ENCODE measurements at regions of chr9 and their contacts with region 1.

Region 1: DNA sequence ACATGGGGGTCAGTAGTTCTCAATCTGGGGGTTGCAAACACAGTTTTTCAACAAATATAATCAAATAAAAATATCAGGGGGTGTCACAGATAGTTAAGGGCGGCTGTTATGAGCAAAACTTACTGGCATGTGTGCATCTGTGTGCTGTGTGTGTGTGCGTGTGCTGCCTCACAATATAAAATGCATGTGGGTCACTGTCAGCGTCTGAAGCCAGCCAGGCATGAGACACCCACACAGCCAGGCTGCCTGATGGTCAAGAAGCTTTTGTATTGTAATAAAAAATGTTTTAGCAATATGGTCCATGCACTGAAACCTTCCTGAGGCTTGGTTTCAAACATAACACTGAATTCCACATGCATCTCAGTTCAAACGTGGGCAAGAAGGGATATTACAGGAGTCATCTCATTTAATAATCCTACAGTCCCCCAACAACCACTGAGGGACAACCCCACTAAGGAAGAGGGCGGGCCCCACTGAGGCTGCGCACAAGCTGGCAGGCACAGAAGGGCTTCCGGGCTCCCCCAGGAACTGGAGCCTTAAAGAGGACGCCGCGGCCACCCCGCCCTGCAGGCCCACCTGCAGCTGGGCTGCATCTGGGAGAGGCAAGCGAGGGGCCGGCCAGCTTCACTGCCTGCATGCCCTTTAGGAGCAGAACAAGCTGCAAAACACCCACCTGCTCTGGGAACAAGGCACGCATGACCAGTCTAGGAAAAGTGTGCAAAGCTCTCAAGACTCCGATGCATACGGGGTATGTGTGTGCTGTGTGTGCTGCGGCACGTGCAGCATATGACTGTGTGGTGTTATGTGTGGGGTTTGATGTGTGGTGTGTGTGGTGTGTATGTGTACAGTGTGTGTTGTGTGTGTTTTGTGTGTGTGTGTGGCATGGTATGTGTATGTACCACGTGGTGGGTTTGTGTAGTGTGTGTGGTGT is 14.1 kb downstream of the SEMA4D start:
- DNase-seq: peak; percentile 73
- ATAC-seq: peak; percentile 76
- H3K4me3 ChIP-seq: peak overlapping the region; percentile 39 to 86 (median 58)
- H3K4me3 Mint-ChIP-seq: peak overlapping the region; percentile 91
- H3K27ac ChIP-seq: peak overlapping the region; percentile 48 to 84
- H3K27ac Mint-ChIP-seq: peak overlapping the region; percentile 93
- H3K4me1 ChIP-seq: peaks cover 47 to 50% of the 10 kb centered on the region in 2 donors
- H3K4me1 Mint-ChIP-seq: peaks cover 81% of the 10 kb centered on the region
- H3K27me3 ChIP-seq: no peaks in the 10 kb centered on the region
- H3K27me3 Mint-ChIP-seq: no peaks in the 10 kb centered on the region
- CTCF ChIP-seq: no peak

Region 2: DNA sequence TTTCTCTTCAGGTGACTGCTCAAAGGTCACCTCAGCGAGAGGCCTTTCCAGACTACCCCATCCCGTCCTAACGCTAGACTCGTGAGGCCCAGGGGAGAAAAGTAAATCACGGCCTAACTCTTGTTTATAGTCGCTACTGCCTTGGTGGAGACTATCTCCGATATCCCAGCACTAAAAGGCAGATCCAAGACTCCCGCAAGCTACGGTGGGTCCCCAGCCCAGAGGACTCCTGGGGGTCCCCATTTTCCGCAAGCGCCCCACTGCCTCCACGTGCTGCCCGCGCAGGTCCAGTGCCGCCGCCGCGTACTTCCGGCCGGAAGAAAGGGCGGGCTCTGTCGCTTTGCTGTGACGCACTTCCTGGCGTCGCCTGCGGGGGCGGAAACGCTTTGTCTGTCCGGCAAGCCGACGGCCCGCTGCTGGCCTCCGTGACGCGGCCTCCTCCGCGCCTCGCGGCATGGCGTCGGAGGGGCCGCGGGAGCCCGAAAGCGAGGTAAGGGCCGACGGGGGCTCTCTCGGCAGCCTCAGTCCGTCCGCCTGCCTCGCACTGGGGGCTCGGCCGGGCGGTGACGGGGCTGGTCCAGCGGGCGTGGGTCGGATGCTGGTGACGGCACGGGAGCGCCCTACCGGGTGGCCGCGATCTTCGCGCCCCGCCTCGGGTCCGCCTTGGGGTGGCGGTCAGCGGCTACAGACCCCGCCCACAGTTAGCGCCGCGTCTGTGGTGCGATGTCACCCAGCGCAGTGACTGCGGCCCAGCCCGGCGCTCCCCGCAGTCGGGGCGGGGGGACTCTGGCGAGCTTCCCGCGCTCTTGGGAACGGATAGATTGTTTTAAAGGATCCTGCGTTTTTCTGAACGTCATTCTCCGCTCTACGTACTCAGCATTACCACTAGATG is 165.5 kb before region 1 on chr9 and contains the start of gene SECISBP2:
- CTCF ChIA-PET with region 1: no interaction called
- POLR2A ChIA-PET with region 1: no interaction called
- intact Hi-C with region 1: loop called (anchors 2 kb)
- DNase-seq: peak; percentile 97
- ATAC-seq: peak; percentile 91
- H3K4me3 ChIP-seq: peak within 1 kb of the TSS; percentile 56 to 93 (median 81)
- H3K4me3 Mint-ChIP-seq: peak within 1 kb of the TSS; percentile 89
- H3K27ac ChIP-seq: peak within 1 kb of the TSS; percentile 96 to 99
- H3K27ac Mint-ChIP-seq: peak within 1 kb of the TSS; percentile 93
- H3K4me1 ChIP-seq: peaks cover 20 to 21% of the 10 kb centered on the region in 2 donors
- H3K4me1 Mint-ChIP-seq: peaks cover 65% of the 10 kb centered on the region
- H3K27me3 ChIP-seq: no peaks in the 10 kb centered on the region
- H3K27me3 Mint-ChIP-seq: no peaks in the 10 kb centered on the region
- CTCF ChIP-seq: peak; percentile 82
- total RNA-seq, gene SECISBP2: 124 and 130 TPM in 2 replicates

Region 3: GRCh38 chr9:89464300-89464901 is 19.5 kb before region 1 on chr9:
- CTCF ChIA-PET with region 1: interaction called, 5 read pairs
- POLR2A ChIA-PET with region 1: interaction called, 5 read pairs
- intact Hi-C with region 1: loop called (anchors 1 kb)
- DNase-seq: peak; percentile 32
- ATAC-seq: peak; percentile 37
- H3K4me3 ChIP-seq: peak overlapping the region; percentile 8 to 58 (median 20)
- H3K4me3 Mint-ChIP-seq: peak overlapping the region; percentile 76
- H3K27ac ChIP-seq: peak overlapping the region; percentile 67 to 78
- H3K27ac Mint-ChIP-seq: peak overlapping the region; percentile 78
- H3K4me1 ChIP-seq: peaks cover 72 to 75% of the 10 kb centered on the region in 2 donors
- H3K4me1 Mint-ChIP-seq: peaks cover 90% of the 10 kb centered on the region
- H3K27me3 ChIP-seq: no peaks in the 10 kb centered on the region
- H3K27me3 Mint-ChIP-seq: no peaks in the 10 kb centered on the region
- CTCF ChIP-seq: no peak

Region 4: GRCh38 chr9:89602978-89603766 is 119.3 kb after region 1 on chr9:
- CTCF ChIA-PET with region 1: no interaction called
- POLR2A ChIA-PET with region 1: no interaction called
- intact Hi-C with region 1: no loop called
- DNase-seq: peak; percentile 90
- ATAC-seq: peak; percentile 44
- H3K4me3 ChIP-seq: peak overlapping the region; percentile 50 to 72 (median 58)
- H3K4me3 Mint-ChIP-seq: peak overlapping the region; percentile 83
- H3K27ac ChIP-seq: no peak overlapping the region
- H3K27ac Mint-ChIP-seq: peak overlapping the region; percentile 44
- H3K4me1 ChIP-seq: peaks cover 21 to 39% of the 10 kb centered on the region in 2 donors
- H3K4me1 Mint-ChIP-seq: peaks cover 32% of the 10 kb centered on the region
- H3K27me3 ChIP-seq: peaks cover 0 to 39% (median 16%) of the 10 kb centered on the region in 4 experiments
- H3K27me3 Mint-ChIP-seq: peaks cover 13% of the 10 kb centered on the region
- CTCF ChIP-seq: peak; percentile 79

Region 5: DNA sequence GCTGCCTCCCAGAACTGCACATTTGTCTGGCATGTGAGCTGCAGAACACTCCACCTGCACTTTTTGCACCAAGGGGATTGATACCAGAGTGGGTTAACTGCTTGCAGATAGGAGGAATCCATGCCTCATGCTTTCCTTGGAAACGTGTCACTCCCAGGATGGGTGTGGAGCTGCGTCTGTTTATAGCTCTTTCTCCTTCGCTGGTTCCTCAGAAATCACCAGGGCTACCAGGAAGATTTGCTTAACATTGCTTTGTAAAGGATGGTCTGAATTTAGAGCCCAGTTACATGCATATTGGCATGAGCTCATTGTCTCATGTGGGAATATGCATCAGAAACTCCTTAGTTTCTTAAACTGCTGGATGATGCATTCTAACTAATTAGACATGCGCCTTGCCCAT is 355.6 kb after region 1 on chr9:
- CTCF ChIA-PET with region 1: no interaction called
- POLR2A ChIA-PET with region 1: no interaction called
- intact Hi-C with region 1: no loop called
- DNase-seq: no peak
- ATAC-seq: no peak
- H3K4me3 ChIP-seq: no peak overlapping the region
- H3K4me3 Mint-ChIP-seq: no peak overlapping the region
- H3K27ac ChIP-seq: no peak overlapping the region
- H3K27ac Mint-ChIP-seq: no peak overlapping the region
- H3K4me1 ChIP-seq: no peaks in the 10 kb centered on the region
- H3K4me1 Mint-ChIP-seq: no peaks in the 10 kb centered on the region
- H3K27me3 ChIP-seq: no peaks in the 10 kb centered on the region
- H3K27me3 Mint-ChIP-seq: peaks cover 3% of the 10 kb centered on the region
- CTCF ChIP-seq: no peak